GM12878 (cell line): ENCODE measurements at regions of chr1 and their contacts with region 1.

Region 1: DNA sequence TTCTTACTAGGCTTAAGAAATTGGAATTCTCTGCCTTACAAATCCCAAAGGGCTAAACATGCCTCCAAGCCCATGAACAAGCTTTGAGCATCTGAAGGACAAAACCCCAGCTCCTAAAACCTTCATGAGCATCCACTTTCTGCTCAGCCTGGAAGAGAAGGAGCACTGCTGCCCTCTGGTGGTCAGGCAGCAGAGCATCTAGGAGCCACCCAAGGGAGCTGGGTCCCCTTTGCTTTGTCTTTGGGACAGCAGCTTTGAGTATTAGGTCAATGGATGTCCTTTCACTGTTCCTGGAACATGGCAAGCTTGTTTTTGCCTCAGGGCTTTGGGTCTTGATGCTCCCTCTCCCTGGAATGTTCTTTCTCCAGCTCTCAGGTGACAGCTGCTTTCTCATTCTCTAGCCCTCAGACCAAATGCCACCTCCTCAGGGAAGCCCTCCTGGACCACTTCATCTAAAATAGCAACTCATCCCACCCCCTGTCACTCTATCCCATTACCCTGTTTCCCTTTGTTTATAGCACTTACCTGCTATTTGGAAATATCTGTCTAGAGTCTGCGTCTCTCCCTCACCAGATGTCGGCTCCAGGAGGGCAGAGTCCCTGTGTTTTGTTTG is 25.7 kb downstream of the RAB7B start:
- DNase-seq: peak; percentile 23
- ATAC-seq: peak; percentile 98
- H3K4me3 ChIP-seq: no peak overlapping the region
- H3K27ac ChIP-seq: no peak overlapping the region
- H3K4me1 ChIP-seq: no peaks in the 10 kb centered on the region
- H3K27me3 ChIP-seq: no peaks in the 10 kb centered on the region; a peak in 1 of 4 replicates
- CTCF ChIP-seq: peak; percentile 90 to 98 (median 93)
- EP300 ChIP-seq: no peak
- POLR2A ChIP-seq: no peak
- RAD21 ChIP-seq: peak; percentile 99

Region 2: DNA sequence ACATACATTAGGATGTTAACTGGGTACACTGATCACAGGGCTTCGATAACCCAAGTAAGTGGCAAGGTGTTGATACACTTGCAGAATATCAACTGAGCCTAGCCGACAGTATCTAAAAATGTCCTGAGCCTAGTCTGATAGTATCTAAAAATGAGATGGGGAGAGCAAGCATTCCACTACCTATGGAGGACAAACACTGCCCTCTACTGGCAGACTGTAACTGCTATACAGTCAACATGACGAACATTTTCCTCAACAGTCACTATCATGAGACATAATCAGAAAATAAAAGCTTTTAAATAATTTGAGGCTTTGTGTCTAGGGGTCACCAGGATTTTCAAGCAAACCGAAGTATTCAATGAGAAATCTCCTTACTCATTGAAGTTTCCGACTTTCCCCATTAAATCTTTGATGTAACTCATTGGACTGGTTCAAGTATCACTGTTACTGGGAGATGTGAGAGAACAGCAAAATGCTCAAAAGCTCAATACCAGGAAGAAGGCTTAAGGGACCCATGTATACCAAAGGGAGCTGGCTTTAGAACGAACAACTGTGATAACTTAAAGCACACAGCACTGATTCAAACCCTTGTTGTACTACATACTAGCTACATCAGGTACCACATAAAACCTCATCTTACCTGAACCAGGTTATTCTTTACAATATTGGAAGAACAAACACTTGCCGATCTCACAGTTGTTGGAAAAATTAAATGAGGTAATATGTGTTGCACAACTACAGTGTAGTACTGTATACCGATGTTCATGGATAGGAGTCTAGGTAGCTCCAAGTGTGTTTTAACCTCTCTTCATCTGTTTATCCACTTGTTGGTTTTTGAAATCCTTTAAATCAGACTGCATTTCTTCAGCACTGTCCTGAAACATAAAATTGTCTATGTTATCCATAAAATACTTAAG is 266.1 kb before region 1 on chr1:
- CTCF ChIA-PET with region 1: interaction called, 65 read pairs
- POLR2A ChIA-PET with region 1: no interaction called
- RAD21 ChIA-PET with region 1: interaction called, 27 read pairs
- SMC1A ChIA-PET with region 1: interaction called, 24 read pairs
- in situ Hi-C with region 1: no loop called
- intact Hi-C with region 1: no loop called
- DNase-seq: peak; percentile 62
- ATAC-seq: peak; percentile 99
- H3K4me3 ChIP-seq: no peak overlapping the region
- H3K27ac ChIP-seq: no peak overlapping the region
- H3K4me1 ChIP-seq: no peaks in the 10 kb centered on the region
- H3K27me3 ChIP-seq: no peaks in the 10 kb centered on the region
- CTCF ChIP-seq: peak; percentile 77 to 95 (median 92)
- EP300 ChIP-seq: no peak
- POLR2A ChIP-seq: no peak
- RAD21 ChIP-seq: peak; percentile 91

Region 3: DNA sequence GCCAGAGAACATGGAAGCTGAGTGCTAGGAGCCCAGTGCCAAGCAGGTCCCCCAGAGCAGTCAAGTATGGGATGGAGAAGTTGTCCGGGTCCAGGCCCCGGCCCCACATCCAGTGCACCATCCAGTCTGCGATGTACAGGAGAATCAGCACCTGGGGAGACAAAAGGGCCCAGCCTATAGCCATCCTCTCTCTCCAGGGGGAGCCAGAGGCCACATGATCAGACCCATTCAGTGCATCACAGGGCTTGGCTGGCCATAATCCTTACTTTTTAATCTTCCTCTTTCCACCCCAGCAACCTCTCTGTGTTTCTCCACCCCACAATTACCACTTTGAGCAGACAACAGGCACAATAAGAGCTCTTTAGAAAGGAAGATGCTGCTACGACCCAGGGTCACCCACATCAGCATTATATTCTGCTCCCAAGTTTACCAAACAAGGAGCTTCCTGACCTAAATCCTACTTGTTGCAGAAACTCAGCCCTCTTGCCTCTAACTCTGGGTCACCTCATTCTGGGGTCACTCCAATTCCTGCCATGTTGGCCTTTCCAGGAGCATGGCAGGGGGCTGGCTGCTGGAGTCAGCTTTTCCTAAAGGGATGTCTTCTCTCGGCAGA is 185.8 kb before region 1 on chr1:
- CTCF ChIA-PET with region 1: interaction called, 222 read pairs
- POLR2A ChIA-PET with region 1: no interaction called
- RAD21 ChIA-PET with region 1: interaction called, 121 read pairs
- SMC1A ChIA-PET with region 1: interaction called, 104 read pairs
- in situ Hi-C with region 1: loop called (anchors 5 kb)
- intact Hi-C with region 1: loop called (anchors 1 kb)
- DNase-seq: no peak
- ATAC-seq: peak; percentile 98
- H3K4me3 ChIP-seq: no peak overlapping the region
- H3K27ac ChIP-seq: no peak overlapping the region
- H3K4me1 ChIP-seq: peaks cover 7% of the 10 kb centered on the region
- H3K27me3 ChIP-seq: no peaks in the 10 kb centered on the region; a peak in 1 of 4 replicates
- CTCF ChIP-seq: peak; percentile 87 to 94 (median 91); a peak in 5 of 6 replicates
- EP300 ChIP-seq: no peak
- POLR2A ChIP-seq: no peak
- RAD21 ChIP-seq: peak; percentile 78

Region 4: GRCh38 chr1:205913451-205914155 is 63.9 kb before region 1 on chr1:
- CTCF ChIA-PET with region 1: interaction called, 230 read pairs
- POLR2A ChIA-PET with region 1: interaction called, 5 read pairs
- RAD21 ChIA-PET with region 1: interaction called, 158 read pairs
- SMC1A ChIA-PET with region 1: interaction called, 110 read pairs
- in situ Hi-C with region 1: no loop called
- intact Hi-C with region 1: no loop called
- DNase-seq: no peak
- ATAC-seq: no peak
- H3K4me3 ChIP-seq: no peak overlapping the region
- H3K27ac ChIP-seq: no peak overlapping the region
- H3K4me1 ChIP-seq: no peaks in the 10 kb centered on the region; the same call in 1 of the 2 replicates
- H3K27me3 ChIP-seq: peaks cover 0 to 2% of the 10 kb centered on the region in 2 experiments; a peak in 1 of 4 replicates
- CTCF ChIP-seq: no peak
- EP300 ChIP-seq: no peak
- POLR2A ChIP-seq: no peak
- RAD21 ChIP-seq: no peak

Region 5: DNA sequence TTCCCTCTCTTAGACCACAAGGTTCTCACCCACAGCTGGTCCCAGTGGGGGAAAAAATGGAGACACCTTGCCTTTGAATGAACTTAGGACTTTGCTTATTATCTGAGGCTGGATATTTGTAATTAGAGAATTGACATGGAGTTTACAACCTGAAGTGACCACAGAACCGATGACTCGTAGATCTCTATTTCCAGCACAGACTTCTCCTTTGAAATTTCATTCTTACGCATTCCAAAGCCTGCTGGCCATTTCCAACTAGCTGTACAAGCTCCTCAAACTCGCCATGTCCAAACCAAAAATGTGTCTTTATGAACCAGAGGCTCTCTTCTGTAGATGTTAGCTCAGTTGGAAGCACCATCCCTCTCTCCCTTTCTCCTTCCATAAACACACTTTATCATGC is 13.7 kb after region 1 on chr1:
- CTCF ChIA-PET with region 1: interaction called, 39 read pairs
- POLR2A ChIA-PET with region 1: interaction called, 3 read pairs
- RAD21 ChIA-PET with region 1: interaction called, 16 read pairs
- SMC1A ChIA-PET with region 1: interaction called, 7 read pairs
- in situ Hi-C with region 1: no loop called
- intact Hi-C with region 1: no loop called
- DNase-seq: no peak
- ATAC-seq: no peak
- H3K4me3 ChIP-seq: no peak overlapping the region
- H3K27ac ChIP-seq: no peak overlapping the region
- H3K4me1 ChIP-seq: no peaks in the 10 kb centered on the region
- H3K27me3 ChIP-seq: peaks cover 4 to 6% of the 10 kb centered on the region in 2 experiments
- CTCF ChIP-seq: no peak
- EP300 ChIP-seq: no peak
- POLR2A ChIP-seq: no peak
- RAD21 ChIP-seq: no peak

Region 6: DNA sequence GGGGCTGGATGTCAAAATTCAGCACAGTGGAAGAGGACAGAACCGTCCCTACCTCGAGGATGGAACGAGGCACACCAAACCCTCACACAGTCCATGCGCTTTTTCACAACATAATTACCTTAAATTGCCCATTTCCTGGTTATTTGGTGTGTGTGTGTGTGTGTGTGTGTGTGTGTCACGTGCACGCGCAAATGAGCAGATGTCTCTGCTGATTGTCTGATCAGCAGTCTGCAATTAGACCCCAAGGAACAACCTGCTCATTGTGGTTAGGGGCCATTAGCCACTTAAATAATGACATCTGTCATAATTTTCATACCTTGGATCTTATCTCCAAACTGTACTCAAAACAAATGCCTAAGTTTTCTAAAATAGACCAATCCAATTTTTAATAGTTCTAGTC is 116.5 kb after region 1 on chr1:
- CTCF ChIA-PET with region 1: interaction called, 10 read pairs
- POLR2A ChIA-PET with region 1: no interaction called
- RAD21 ChIA-PET with region 1: no interaction called
- SMC1A ChIA-PET with region 1: interaction called, 4 read pairs
- in situ Hi-C with region 1: no loop called
- intact Hi-C with region 1: no loop called
- DNase-seq: no peak
- ATAC-seq: no peak
- H3K4me3 ChIP-seq: no peak overlapping the region
- H3K27ac ChIP-seq: no peak overlapping the region
- H3K4me1 ChIP-seq: no peaks in the 10 kb centered on the region; the same call in 1 of the 2 replicates
- H3K27me3 ChIP-seq: no peaks in the 10 kb centered on the region; a peak in 1 of 4 replicates
- CTCF ChIP-seq: no peak
- EP300 ChIP-seq: no peak
- POLR2A ChIP-seq: no peak
- RAD21 ChIP-seq: no peak